Sciatic nerve (tissue), 2 donors: ENCODE measurements at regions of chr5 and their contacts with region 1.

Region 1: DNA sequence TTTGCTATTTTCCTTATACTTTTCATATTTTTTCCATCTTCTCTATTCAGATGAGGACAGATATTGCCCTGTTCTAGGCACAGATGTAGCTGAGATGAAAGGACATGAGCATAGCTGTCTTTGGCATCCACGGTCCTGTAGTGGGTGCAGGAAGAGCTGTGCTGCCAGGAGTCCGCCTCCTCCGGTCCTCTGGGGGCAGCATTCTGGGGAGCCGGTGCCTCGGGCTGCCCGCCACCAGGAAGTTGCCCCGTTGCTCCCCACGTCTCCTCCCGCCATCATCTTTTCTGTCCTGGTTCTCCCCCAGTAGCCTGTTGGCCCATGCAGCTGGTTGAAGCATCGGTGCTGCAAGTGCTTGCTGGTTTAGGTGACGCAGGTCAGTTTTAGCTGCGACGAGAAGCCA is 170.0 kb upstream of the IRX4 start:
- DNase-seq: no peak
- ATAC-seq: no peak

Region 2: GRCh38 chr5:1268666-1269065 is 784.0 kb before region 1 on chr5:
- intact Hi-C with region 1: no loop called
- DNase-seq: no peak
- ATAC-seq: no peak

Region 3: DNA sequence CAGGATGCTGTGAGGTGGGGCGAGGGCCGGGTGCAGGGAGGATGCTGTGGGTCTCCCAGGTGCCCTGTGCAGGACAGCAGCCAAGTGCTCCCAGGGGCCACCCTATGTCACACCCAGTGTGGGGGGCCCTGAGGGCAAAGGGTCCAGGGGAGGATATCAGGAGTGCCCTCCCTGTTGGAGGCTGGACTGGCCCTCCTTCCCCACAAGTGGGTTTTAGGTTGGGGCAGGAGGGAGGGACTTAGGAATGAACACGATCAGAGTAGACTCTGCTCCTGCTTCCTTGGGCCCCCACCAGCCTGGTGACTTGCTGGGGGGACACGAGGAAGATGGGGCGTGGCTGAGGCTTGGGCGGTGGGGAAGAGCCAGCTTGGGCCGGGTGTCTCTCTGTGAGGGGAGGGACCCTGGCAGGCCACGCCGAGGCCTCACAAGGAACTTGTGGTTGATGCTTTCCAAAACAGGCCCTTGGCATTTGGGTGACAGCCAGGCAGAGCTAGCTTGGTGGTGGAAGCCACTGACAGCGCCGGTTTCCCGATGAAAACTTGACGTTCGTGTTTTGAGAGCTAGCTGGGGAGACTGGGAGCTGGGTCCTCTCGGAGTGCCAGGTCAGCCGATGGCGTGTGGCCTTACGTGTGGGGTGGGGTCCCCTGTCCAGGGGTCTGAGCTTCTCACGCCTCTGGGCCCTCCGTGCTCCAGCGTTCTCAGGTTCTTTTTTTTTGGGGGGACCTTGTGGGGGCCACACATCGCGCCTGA is 399.9 kb before region 1 on chr5:
- intact Hi-C with region 1: no loop called
- DNase-seq: no peak
- ATAC-seq: no peak

Region 4: GRCh38 chr5:1851290-1851934 is 201.3 kb before region 1 on chr5:
- intact Hi-C with region 1: no loop called
- DNase-seq: no peak
- ATAC-seq: no peak

Region 5: DNA sequence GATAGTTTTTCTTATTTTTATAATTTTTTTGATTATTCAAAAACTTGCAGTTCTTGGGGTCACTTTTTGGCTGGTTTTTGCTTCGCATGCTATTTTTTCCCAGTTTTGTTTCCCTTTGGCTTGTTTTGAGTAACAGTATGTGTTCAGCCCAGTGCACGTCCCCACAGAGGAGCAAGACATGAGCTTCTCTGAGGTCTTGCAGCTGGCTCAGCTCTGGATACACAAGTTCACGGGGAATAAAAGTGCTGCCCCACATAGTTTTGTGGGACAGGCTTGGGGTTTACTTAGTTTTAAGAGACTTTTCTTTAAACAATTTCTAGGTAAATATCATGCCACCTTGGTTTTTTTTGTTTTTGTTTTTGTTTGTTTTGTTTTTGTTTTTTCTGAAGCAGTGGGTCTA is 1245.2 kb after region 1 on chr5:
- intact Hi-C with region 1: loop called (anchors 5 kb)
- DNase-seq: no peak
- ATAC-seq: no peak